Transverse colon (tissue), 4 donors: ENCODE measurements at regions of chr19 and their contacts with region 1.

Region 1: GRCh38 chr19:23470873-23471545 is 75.7 kb upstream of the ZNF91 start:
- DNase-seq: peak; percentile 34
- H3K4me3 ChIP-seq: peak overlapping the region in 3 of 4 donors; percentile 14 to 30 (median 17)
- H3K27ac ChIP-seq: no peak overlapping the region
- H3K4me1 ChIP-seq: no peaks in the 10 kb centered on the region
- H3K27me3 ChIP-seq: peaks cover 14% of the 10 kb centered on the region
- CTCF ChIP-seq: no peak
- EP300 ChIP-seq: no peak
- POLR2A ChIP-seq: no peak

Region 2: DNA sequence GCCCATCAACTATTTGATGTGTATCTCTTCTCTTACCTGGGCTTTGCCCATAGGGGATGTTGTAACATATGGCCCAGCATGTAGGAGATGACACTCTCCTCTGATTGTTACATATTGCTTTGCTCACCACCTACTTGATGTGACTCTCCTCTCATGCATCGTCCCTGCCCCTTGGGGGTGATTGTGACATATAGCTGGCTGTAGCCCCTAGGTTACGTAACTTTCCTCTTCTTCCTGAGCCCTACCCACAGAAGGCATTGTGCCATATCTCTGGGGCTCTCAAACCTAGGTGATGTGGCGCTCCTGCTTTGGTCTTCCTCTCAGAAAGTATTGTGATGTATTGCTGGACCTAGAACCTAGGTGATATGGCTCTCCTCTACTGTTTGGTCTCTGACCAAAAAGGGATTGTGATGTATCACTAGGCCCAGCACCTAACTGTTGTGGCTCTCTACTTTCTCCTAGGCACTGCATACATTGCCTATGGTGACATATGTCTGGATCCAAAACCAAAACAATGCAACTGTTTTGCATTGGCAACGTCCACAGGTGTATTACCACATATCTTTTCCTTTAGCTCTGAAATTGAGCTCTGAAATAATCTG is 149.0 kb before region 1 on chr19:
- in situ Hi-C with region 1: loop called in 1 of 4 experiments (anchors 5 kb)
- intact Hi-C with region 1: loop called (anchors 2 kb)
- DNase-seq: no peak
- H3K4me3 ChIP-seq: no peak overlapping the region
- H3K27ac ChIP-seq: no peak overlapping the region
- H3K4me1 ChIP-seq: no peaks in the 10 kb centered on the region
- H3K27me3 ChIP-seq: no peaks in the 10 kb centered on the region
- CTCF ChIP-seq: no peak
- EP300 ChIP-seq: no peak
- POLR2A ChIP-seq: no peak